Ovary (tissue), 10 donors: ENCODE measurements at regions of chr2 and their contacts with region 1.

Region 1: GRCh38 chr2:101012706-101013181 is 10.7 kb downstream of the RPL31 start:
- DNase-seq: peak in 1 of 5 donors; percentile 53
- H3K4me3 ChIP-seq: no peak overlapping the region
- H3K27ac ChIP-seq: no peak overlapping the region
- H3K4me1 ChIP-seq: no peaks in the 10 kb centered on the region
- H3K27me3 ChIP-seq: no peaks in the 10 kb centered on the region
- CTCF ChIP-seq: peak; percentile 73 to 81 (median 81)
- EP300 ChIP-seq: no peak
- POLR2A ChIP-seq: no peak

Region 2: DNA sequence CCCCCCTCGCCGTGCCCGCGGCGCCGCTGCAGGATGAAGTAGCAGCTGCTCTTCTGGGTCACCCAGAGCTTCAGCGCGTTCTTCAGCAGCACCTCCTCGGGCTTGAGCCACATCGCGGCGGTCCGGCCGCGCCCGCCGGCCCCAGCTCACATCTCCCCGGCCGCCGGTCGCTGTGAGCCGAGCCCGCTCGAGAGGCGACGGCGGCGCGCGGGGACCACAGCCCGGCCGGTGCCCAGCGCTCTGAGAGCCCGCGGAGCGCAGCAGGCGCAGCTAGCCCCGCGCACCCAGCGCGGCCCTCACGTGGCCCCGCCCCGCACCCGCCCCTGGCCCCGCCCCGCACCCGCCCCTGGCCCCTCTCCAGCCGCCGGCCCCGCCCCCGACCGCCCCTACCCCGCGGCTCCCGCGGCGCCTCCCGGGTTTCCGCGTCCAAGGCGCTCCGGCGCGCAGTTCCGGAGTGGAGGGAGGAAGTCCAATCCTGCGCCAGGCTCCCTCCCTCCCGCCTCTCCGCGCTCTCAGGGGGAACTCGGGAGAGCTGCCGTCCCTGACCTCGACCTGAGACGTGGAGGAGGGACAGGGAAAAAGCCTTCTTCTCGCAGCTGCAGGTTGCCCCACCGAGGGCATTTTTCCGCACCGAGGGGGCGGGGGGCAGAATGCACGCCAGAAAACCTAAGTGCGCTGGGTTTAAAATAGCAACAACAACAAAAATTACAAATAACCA is 138.6 kb after region 1 on chr2 and contains the start of gene TBC1D8:
- intact Hi-C with region 1: loop called in 3 of 4 experiments (anchors 5 kb)
- DNase-seq: peak; percentile 88 to 94 (median 93)
- H3K4me3 ChIP-seq: peak within 1 kb of the TSS; percentile 76
- H3K27ac ChIP-seq: peak within 1 kb of the TSS; percentile 36 to 79
- H3K4me1 ChIP-seq: peaks cover 15% of the 10 kb centered on the region
- H3K27me3 ChIP-seq: no peaks in the 10 kb centered on the region
- CTCF ChIP-seq: peak in 1 of 3 donors; percentile 11
- EP300 ChIP-seq: no peak
- POLR2A ChIP-seq: peak; percentile 57
- total RNA-seq, gene TBC1D8: 14.3 to 44.6 (median 15.8) TPM

Region 3: DNA sequence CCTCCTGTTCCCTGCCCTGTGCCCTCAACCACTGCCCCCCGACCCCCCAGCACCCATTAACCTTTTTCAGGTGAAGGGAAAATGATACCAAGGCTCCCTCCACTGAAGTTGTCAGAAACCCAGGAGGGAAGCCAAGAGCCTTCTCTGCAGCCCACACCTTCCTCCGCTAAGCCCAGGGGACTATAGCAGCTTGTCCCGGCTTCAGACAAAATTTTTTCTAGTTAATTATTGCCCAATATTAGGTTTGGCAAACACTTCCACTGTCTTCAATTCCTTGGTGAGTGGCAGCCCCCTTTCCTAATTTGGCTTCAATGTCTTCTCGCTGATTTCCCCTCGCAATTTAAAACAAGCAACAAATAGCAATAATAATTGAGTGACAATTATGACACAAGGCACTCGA is 438.2 kb after region 1 on chr2:
- intact Hi-C with region 1: no loop called
- DNase-seq: no peak
- H3K4me3 ChIP-seq: no peak overlapping the region
- H3K27ac ChIP-seq: no peak overlapping the region
- H3K4me1 ChIP-seq: no peaks in the 10 kb centered on the region
- H3K27me3 ChIP-seq: no peaks in the 10 kb centered on the region
- CTCF ChIP-seq: no peak
- EP300 ChIP-seq: no peak
- POLR2A ChIP-seq: no peak